B cell (primary cell): ENCODE measurements at regions of chr16 and their contacts with region 1.

Region 1: DNA sequence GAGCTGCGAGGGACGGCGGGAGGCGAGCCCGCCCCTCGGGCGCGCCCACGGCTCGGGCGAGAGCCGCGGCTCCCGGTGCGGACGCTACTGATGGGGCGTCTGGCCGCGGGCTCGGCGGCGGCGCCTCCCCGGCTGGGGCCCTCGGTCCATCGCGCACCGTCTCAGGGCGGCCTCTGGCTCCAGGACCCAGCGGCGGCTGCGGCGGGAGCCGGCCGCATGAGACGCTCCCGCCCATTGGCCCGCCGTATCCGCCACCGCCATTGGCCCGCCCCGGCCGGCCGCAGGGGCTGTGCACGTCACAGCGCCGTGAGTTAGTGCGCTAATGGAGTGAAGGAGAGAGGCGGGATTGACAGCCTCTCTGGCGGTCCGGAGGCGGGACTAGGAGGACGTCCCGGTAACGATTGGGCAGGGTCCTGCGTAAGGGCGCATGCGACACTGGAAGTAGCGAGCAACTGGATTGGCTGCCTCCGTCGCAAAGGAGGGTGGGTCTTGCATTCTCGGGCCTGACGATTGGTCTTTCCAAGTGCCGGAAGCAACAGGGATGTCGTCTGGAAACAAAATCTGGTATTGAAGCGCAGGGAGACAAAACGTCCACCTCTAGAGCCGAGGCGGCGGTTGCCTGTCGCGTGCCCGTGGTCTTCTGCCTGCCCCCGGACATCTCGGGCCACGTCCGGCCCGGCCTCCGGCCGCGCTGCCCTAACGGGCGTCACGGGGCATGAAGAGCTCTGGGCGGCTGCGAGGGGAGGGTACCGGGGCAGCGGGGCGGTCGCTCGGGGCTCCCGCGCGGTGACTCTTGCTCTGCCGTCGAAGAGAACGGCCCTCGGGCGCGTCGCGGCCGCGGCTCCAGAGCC is at the start of gene ANKRD11:
- DNase-seq: peak; percentile 99
- ATAC-seq: peak; percentile 81
- H3K4me3 ChIP-seq: peak within 1 kb of the TSS; percentile 59 to 93 (median 86)
- H3K4me3 Mint-ChIP-seq: peak within 1 kb of the TSS; percentile 93
- H3K27ac ChIP-seq: peak within 1 kb of the TSS; percentile 91 to 97
- H3K27ac Mint-ChIP-seq: peak within 1 kb of the TSS; percentile 97
- H3K4me1 ChIP-seq: peaks cover 41 to 46% of the 10 kb centered on the region in 2 donors
- H3K4me1 Mint-ChIP-seq: peaks cover 56% of the 10 kb centered on the region
- H3K27me3 ChIP-seq: no peaks in the 10 kb centered on the region
- H3K27me3 Mint-ChIP-seq: no peaks in the 10 kb centered on the region
- CTCF ChIP-seq: no peak
- total RNA-seq, gene ANKRD11: 314 and 320 TPM in 2 replicates

Region 2: GRCh38 chr16:89241187-89242007 is 249.2 kb before region 1 on chr16:
- CTCF ChIA-PET with region 1: no interaction called
- POLR2A ChIA-PET with region 1: no interaction called
- intact Hi-C with region 1: loop called (anchors 2 kb)
- DNase-seq: peak; percentile 94
- ATAC-seq: peak; percentile 77
- H3K4me3 ChIP-seq: peak overlapping the region; percentile 74 to 95 (median 82)
- H3K4me3 Mint-ChIP-seq: peak overlapping the region; percentile 99
- H3K27ac ChIP-seq: peak overlapping the region; percentile 93 to 97
- H3K27ac Mint-ChIP-seq: peak overlapping the region; percentile 100
- H3K4me1 ChIP-seq: peaks cover 0 to 11% of the 10 kb centered on the region in 2 donors
- H3K4me1 Mint-ChIP-seq: peaks cover 14% of the 10 kb centered on the region
- H3K27me3 ChIP-seq: no peaks in the 10 kb centered on the region
- H3K27me3 Mint-ChIP-seq: no peaks in the 10 kb centered on the region
- CTCF ChIP-seq: no peak

Region 3: DNA sequence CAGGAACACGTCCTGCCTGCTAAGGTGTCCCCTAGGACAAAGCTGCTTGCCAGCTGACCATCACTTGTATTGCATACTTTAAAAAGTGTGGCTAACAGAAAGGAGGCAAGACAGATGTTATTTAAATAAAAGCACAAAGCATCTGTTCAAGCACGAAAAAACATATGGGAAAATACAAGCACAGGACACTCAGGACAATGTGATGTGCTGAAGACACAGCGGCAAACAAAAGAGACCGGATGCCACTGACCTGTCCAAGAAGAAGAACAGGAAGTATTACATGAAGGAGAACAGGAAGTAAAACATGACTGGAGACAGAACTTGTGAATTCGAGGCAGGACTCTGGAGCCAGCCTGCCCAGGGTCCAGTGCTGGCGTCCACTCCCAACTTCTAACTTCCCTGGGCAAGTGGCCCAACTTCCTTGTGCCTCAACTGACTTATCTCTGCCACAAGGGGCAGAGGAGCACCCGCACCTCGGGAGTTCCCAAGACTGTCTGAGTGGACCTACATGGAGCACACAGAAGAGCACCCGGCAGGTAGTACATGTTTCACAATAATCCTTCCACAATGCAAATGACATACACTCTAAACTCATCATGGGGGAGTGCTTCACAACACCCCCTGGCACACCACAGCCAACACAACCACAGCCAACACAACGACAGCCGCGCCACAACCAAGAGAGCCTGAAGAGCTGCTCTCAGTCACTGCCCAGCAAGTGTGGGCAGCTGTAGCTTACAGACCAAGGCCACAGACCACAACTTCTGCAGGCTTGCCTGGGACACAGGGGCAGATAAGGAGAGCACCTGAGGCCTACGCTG is 36.9 kb before region 1 on chr16:
- CTCF ChIA-PET with region 1: interaction called, 3 read pairs
- POLR2A ChIA-PET with region 1: no interaction called
- intact Hi-C with region 1: loop called (anchors 5 kb)
- DNase-seq: peak; percentile 50
- ATAC-seq: peak; percentile 34
- H3K4me3 ChIP-seq: no peak overlapping the region
- H3K4me3 Mint-ChIP-seq: no peak overlapping the region
- H3K27ac ChIP-seq: no peak overlapping the region
- H3K27ac Mint-ChIP-seq: peak overlapping the region; percentile 66
- H3K4me1 ChIP-seq: peaks cover 49 to 51% of the 10 kb centered on the region in 2 donors
- H3K4me1 Mint-ChIP-seq: peaks cover 56% of the 10 kb centered on the region
- H3K27me3 ChIP-seq: no peaks in the 10 kb centered on the region
- H3K27me3 Mint-ChIP-seq: no peaks in the 10 kb centered on the region
- CTCF ChIP-seq: no peak

Region 4: GRCh38 chr16:89476804-89477261 is 13.8 kb before region 1 on chr16:
- CTCF ChIA-PET with region 1: interaction called, 5 read pairs
- POLR2A ChIA-PET with region 1: interaction called, 20 read pairs
- intact Hi-C with region 1: loop called (anchors 2 kb)
- DNase-seq: peak; percentile 79
- ATAC-seq: peak; percentile 92
- H3K4me3 ChIP-seq: peak overlapping the region in 3 of 5 experiments; percentile 5 to 27 (median 23)
- H3K4me3 Mint-ChIP-seq: peak overlapping the region; percentile 76
- H3K27ac ChIP-seq: peak overlapping the region; percentile 58 to 66
- H3K27ac Mint-ChIP-seq: peak overlapping the region; percentile 69
- H3K4me1 ChIP-seq: peaks cover 67 to 85% of the 10 kb centered on the region in 2 donors
- H3K4me1 Mint-ChIP-seq: peaks cover 83% of the 10 kb centered on the region
- H3K27me3 ChIP-seq: no peaks in the 10 kb centered on the region
- H3K27me3 Mint-ChIP-seq: no peaks in the 10 kb centered on the region
- CTCF ChIP-seq: no peak

Region 5: GRCh38 chr16:89560378-89561141 is 69.9 kb after region 1 on chr16 and contains the start of gene RPL13:
- CTCF ChIA-PET with region 1: no interaction called
- POLR2A ChIA-PET with region 1: no interaction called
- intact Hi-C with region 1: loop called (anchors 1 kb)
- DNase-seq: peak; percentile 95
- ATAC-seq: peak; percentile 94
- H3K4me3 ChIP-seq: peak within 1 kb of the TSS; percentile 54 to 99 (median 92)
- H3K4me3 Mint-ChIP-seq: peak within 1 kb of the TSS; percentile 92
- H3K27ac ChIP-seq: peak within 1 kb of the TSS; percentile 82 to 91
- H3K27ac Mint-ChIP-seq: peak within 1 kb of the TSS; percentile 95
- H3K4me1 ChIP-seq: peaks cover 36 to 41% of the 10 kb centered on the region in 2 donors
- H3K4me1 Mint-ChIP-seq: peaks cover 43% of the 10 kb centered on the region
- H3K27me3 ChIP-seq: no peaks in the 10 kb centered on the region
- H3K27me3 Mint-ChIP-seq: no peaks in the 10 kb centered on the region
- CTCF ChIP-seq: no peak
- total RNA-seq, gene RPL13: 3,172 and 3,184 TPM in 2 replicates